T-cell (primary cell): ENCODE measurements at regions of chr10 and their contacts with region 1.

Region 1: DNA sequence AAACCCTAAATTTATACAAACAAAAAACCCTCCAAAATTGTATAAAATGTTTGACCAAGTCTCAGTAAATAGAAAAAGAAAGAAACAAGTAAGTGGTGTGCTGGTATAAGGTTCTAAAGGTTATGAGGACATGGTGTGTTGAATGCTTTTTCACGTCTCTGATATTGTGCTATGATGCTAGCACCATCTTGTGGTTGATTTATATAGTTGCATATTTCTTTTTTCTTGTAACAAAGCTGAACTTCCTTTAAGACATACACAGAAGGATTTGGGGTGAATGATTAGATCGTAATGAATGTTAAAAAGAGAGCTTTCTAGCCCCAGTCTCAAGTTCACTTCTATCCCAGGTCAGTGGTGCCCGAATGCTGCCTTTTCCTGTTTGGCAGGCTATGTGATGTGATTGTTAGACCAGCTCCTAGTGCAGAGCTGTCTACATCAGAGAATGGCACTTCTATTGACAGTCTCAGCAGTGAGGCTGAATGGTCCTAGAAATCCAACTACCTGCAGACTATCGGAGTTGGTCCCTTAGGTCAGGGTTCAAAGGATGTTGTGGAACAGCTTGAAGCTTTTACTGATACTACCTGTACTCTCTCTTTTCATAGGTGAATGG is 25.0 kb downstream of the VTI1A start:
- DNase-seq: peak in 2 of 35 experiments; percentile 2 to 62
- ATAC-seq: peak; percentile 27 to 63 (median 52)
- H3K4me3 ChIP-seq: no peak overlapping the region
- H3K4me3 Mint-ChIP-seq: no peak overlapping the region
- H3K27ac ChIP-seq: no peak overlapping the region
- H3K27ac Mint-ChIP-seq: no peak overlapping the region
- H3K4me1 ChIP-seq: no peaks in the 10 kb centered on the region
- H3K4me1 Mint-ChIP-seq: peaks cover 7 to 16% (median 9%) of the 10 kb centered on the region in 3 donors
- H3K27me3 ChIP-seq: no peaks in the 10 kb centered on the region
- H3K27me3 Mint-ChIP-seq: no peaks in the 10 kb centered on the region

Region 2: DNA sequence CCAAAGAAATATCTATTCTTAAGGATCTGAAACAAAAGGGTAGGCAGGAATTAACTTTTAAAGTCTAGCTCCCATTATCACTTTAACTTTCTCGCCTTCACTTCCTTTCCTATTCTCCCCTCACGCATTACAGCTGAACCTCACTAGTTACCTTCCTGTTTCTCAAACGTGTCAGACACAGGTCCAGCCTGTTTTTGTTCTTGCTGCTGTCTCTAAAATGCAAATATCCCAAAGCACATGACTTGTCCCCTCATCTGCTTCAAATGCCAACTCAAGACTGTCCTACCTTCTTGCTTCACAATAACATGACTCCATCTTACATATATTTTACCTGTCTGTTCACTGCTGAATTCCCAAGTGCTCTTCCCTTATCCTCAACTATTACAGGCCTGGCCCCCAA is 42.8 kb before region 1 on chr10:
- CTCF ChIA-PET with region 1: interaction called, 5 to 10 read pairs
- POLR2A ChIA-PET with region 1: no interaction called
- DNase-seq: no peak
- ATAC-seq: no peak
- H3K4me3 ChIP-seq: no peak overlapping the region
- H3K4me3 Mint-ChIP-seq: no peak overlapping the region
- H3K27ac ChIP-seq: no peak overlapping the region
- H3K27ac Mint-ChIP-seq: peak overlapping the region; percentile 65 to 66
- H3K4me1 ChIP-seq: no peaks in the 10 kb centered on the region
- H3K4me1 Mint-ChIP-seq: peaks cover 0 to 5% (median 0%) of the 10 kb centered on the region in 3 donors
- H3K27me3 ChIP-seq: no peaks in the 10 kb centered on the region
- H3K27me3 Mint-ChIP-seq: no peaks in the 10 kb centered on the region

Region 3: GRCh38 chr10:112446855-112447711 is 24.9 kb before region 1 on chr10 and contains the starts of genes VTI1A and ZDHHC6:
- CTCF ChIA-PET with region 1: interaction called in 1 of 2 experiments, 11 read pairs
- POLR2A ChIA-PET with region 1: interaction called in 1 of 2 experiments, 3 read pairs
- DNase-seq: peak; percentile 64 to 90 (median 78)
- ATAC-seq: peak; percentile 91 to 94 (median 92)
- H3K4me3 ChIP-seq: peak within 1 kb of the TSS; percentile 94 to 99
- H3K4me3 Mint-ChIP-seq: peak within 1 kb of the TSS; percentile 91 to 98 (median 93)
- H3K27ac ChIP-seq: peak within 1 kb of the TSS; percentile 86
- H3K27ac Mint-ChIP-seq: peak within 1 kb of the TSS; percentile 85 to 99
- H3K4me1 ChIP-seq: peaks cover 12 to 13% of the 10 kb centered on the region in 2 experiments
- H3K4me1 Mint-ChIP-seq: peaks cover 49 to 72% (median 70%) of the 10 kb centered on the region in 3 donors
- H3K27me3 ChIP-seq: no peaks in the 10 kb centered on the region
- H3K27me3 Mint-ChIP-seq: no peaks in the 10 kb centered on the region
- total RNA-seq, gene VTI1A: 41.3 to 53.6 (median 43.5) TPM
- total RNA-seq, gene ZDHHC6: 39.4 to 51.4 (median 45.9) TPM

Region 4: DNA sequence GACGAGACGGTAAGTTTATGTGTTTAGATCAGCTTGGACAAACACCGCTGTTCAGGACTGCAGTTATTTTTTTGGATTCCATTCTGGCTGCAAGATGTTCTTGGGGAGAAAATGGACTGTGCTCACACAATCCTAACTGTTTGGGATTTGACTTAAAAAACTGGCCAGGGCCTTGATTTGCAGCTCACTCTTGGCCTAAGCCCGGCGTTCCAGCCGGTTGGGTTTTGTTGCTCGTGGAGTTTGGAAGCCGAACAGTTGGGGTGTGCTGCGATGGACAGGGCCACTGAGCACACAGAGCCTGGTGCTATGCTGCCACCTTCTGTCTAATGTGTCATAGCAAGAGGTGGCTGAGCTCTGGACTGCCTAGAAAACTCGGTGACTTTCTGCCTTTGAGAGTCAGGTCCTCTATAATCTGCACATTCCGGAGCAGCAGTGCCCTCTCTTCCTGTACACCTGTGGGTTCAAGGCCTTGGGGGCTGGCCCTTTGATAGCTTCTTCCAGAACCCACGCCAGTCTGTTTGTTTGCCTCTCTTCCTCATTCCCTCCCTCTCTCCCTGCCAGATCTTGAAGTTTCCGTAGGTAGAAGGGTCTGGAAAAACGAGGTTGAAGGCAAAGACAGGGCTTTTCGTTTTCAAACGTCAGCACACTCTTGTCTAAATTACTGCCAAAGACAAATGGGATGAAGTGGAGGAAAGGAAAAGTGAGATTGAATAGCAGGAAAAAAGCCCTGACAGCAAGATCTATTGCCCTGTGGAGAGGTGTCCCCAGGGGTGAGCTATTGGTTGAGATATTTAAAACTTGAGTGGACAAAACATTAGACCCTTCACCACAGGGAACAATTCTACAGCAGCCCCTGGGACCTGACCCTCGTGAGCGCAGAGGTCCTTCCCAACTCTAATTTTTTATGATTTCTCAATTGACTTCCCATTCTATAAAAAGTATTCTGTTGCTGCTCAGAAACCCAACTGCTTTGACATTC is 913.3 kb after region 1 on chr10:
- CTCF ChIA-PET with region 1: interaction called, 8 to 13 read pairs
- POLR2A ChIA-PET with region 1: interaction called in 1 of 2 experiments, 5 read pairs
- DNase-seq: peak; percentile 24 to 81 (median 49)
- ATAC-seq: peak; percentile 82 to 94 (median 84)
- H3K4me3 ChIP-seq: no peak overlapping the region
- H3K4me3 Mint-ChIP-seq: peak overlapping the region; percentile 22 to 39 (median 26)
- H3K27ac ChIP-seq: no peak overlapping the region
- H3K27ac Mint-ChIP-seq: peak overlapping the region; percentile 29 to 73
- H3K4me1 ChIP-seq: peaks cover 9 to 16% of the 10 kb centered on the region in 2 experiments
- H3K4me1 Mint-ChIP-seq: peaks cover 28 to 34% (median 32%) of the 10 kb centered on the region in 3 donors
- H3K27me3 ChIP-seq: peaks cover 0 to 9% of the 10 kb centered on the region in 2 experiments
- H3K27me3 Mint-ChIP-seq: no peaks in the 10 kb centered on the region